CD4-positive, alpha-beta memory T cell (primary cell): ENCODE measurements at regions of chr12 and their contacts with region 1.

Region 1: GRCh38 chr12:14365294-14366208 is at the start of gene ATF7IP:
- DNase-seq: peak; percentile 95 to 97 (median 97)
- H3K4me3 ChIP-seq: peak within 1 kb of the TSS; percentile 45 to 81
- H3K4me3 Mint-ChIP-seq: peak within 1 kb of the TSS; percentile 82 to 99 (median 92)
- H3K27ac ChIP-seq: peak within 1 kb of the TSS; percentile 90
- H3K27ac Mint-ChIP-seq: peak within 1 kb of the TSS; percentile 85 to 99 (median 96)
- H3K4me1 ChIP-seq: peaks cover 34% of the 10 kb centered on the region
- H3K4me1 Mint-ChIP-seq: peaks cover 11 to 55% (median 29%) of the 10 kb centered on the region in 4 donors
- H3K27me3 ChIP-seq: no peaks in the 10 kb centered on the region
- H3K27me3 Mint-ChIP-seq: no peaks in the 10 kb centered on the region
- total RNA-seq, gene ATF7IP: 209 to 223 TPM

Region 2: DNA sequence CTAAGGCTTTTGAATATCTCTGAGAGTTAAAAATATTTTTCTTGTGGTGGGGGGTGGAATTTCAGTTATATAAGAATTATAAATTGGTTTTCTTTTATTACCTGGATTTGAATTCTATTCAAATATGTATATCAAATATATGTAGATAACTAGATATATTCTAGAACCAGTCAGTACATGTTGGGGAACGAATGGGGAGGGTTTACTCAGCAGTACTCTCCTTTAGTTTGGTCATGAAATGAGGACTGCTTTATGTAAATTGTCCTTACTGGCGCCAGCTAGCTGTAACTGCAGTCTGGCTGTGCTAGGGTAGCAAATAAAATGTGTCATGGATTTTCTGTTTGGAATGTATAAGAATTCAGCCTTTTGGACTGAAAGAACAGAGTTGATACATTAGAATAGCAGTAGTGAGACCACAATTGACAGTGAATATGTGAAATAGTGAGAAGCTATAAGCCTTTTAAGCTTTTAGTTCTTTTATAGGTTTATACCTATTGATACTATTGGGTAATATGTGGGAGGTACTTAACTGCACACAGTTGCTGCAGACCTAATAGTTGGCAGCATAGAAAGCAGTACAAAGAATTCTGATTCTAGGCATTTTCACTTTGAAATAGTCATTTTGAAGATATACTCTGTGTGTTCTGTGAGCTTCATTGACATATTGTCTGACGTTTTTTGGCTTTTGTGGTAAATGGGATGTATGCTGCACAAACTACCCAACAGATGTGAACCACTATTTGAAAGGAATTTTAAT is 28.9 kb after region 1 on chr12:
- CTCF ChIA-PET with region 1: interaction called, 29 read pairs
- POLR2A ChIA-PET with region 1: interaction called, 228 read pairs
- intact Hi-C with region 1: loop called (anchors 1 kb)
- DNase-seq: peak; percentile 74 to 84 (median 75)
- H3K4me3 ChIP-seq: peak overlapping the region in 1 of 2 donors; percentile 25
- H3K4me3 Mint-ChIP-seq: peak overlapping the region; percentile 78 to 89 (median 83)
- H3K27ac ChIP-seq: peak overlapping the region; percentile 73
- H3K27ac Mint-ChIP-seq: peak overlapping the region; percentile 93 to 98 (median 97)
- H3K4me1 ChIP-seq: peaks cover 98% of the 10 kb centered on the region
- H3K4me1 Mint-ChIP-seq: peaks cover 55 to 94% (median 75%) of the 10 kb centered on the region in 4 donors
- H3K27me3 ChIP-seq: no peaks in the 10 kb centered on the region
- H3K27me3 Mint-ChIP-seq: no peaks in the 10 kb centered on the region

Region 3: GRCh38 chr12:14417715-14418114 is 52.2 kb after region 1 on chr12:
- CTCF ChIA-PET with region 1: interaction called, 125 read pairs
- POLR2A ChIA-PET with region 1: interaction called, 196 read pairs
- intact Hi-C with region 1: loop called (anchors 1 kb)
- DNase-seq: peak; percentile 70 to 86 (median 79)
- H3K4me3 ChIP-seq: no peak overlapping the region
- H3K4me3 Mint-ChIP-seq: peak overlapping the region; percentile 72 to 88 (median 84)
- H3K27ac ChIP-seq: peak overlapping the region; percentile 34
- H3K27ac Mint-ChIP-seq: peak overlapping the region; percentile 66 to 95 (median 86)
- H3K4me1 ChIP-seq: peaks cover 73% of the 10 kb centered on the region
- H3K4me1 Mint-ChIP-seq: peaks cover 46 to 73% (median 59%) of the 10 kb centered on the region in 4 donors
- H3K27me3 ChIP-seq: no peaks in the 10 kb centered on the region
- H3K27me3 Mint-ChIP-seq: no peaks in the 10 kb centered on the region

Region 4: DNA sequence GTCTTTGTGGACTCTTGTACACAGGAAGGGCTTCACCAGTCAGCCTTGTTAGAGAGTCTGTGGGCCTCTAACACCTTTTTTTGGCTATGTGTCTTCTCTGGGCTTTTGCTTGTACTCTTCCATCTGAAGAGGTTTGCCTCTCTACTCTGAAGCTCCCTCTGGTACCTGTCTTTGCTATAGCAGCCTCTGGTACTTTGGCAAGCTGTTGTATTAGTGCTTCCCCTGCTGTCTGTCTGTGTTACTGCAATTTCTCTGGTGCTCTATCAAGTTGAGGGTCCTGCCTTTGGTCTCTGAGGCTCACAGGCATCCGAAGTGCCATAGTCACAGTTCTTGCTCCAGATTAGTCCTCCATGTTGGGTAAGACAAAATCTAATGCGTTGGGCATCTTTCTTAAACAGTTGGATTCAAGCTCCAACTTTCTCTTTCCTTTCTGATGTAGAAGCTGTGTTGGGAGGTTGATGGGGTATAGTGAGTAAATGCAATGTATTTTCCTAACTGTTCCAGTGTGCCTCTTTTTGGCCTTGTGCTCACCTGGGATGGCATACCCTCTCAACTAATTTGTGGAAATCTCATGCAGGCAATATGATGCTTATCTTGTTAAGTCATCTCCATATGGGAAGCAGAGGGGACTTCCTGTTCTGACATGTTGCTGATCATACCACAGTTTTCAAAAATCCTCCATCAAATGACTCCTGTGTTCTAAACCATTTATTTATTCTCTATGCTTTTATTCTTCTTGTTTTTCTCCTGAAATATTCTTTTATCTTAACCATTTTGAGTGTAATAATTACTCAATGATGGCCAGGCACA is 88.8 kb after region 1 on chr12:
- CTCF ChIA-PET with region 1: interaction called, 25 read pairs
- POLR2A ChIA-PET with region 1: interaction called, 10 read pairs
- intact Hi-C with region 1: no loop called
- DNase-seq: peak in 4 of 5 donors; percentile 22 to 38 (median 27)
- H3K4me3 ChIP-seq: no peak overlapping the region
- H3K4me3 Mint-ChIP-seq: peak overlapping the region in 5 of 8 donors; percentile 38 to 69 (median 46)
- H3K27ac ChIP-seq: no peak overlapping the region
- H3K27ac Mint-ChIP-seq: peak overlapping the region; percentile 66 to 89 (median 75)
- H3K4me1 ChIP-seq: peaks cover 39% of the 10 kb centered on the region
- H3K4me1 Mint-ChIP-seq: peaks cover 41 to 70% (median 49%) of the 10 kb centered on the region in 4 donors
- H3K27me3 ChIP-seq: no peaks in the 10 kb centered on the region
- H3K27me3 Mint-ChIP-seq: no peaks in the 10 kb centered on the region